Common myeloid progenitor, CD34-positive (primary cell): ENCODE measurements at regions of chr1 and their contacts with region 1.

Region 1: GRCh38 chr1:35488336-35488735 is 68.9 kb downstream of the KIAA0319L start:
- DNase-seq: peak in 2 of 3 donors; percentile 46 to 53
- H3K4me3 ChIP-seq: peak overlapping the region in 4 of 7 experiments; percentile 29 to 56 (median 48)
- H3K27ac ChIP-seq: peak overlapping the region in 1 of 2 experiments; percentile 18
- H3K4me1 ChIP-seq: peaks cover 0 to 12% (median 7%) of the 10 kb centered on the region in 4 experiments
- H3K27me3 ChIP-seq: no peaks in the 10 kb centered on the region

Region 2: DNA sequence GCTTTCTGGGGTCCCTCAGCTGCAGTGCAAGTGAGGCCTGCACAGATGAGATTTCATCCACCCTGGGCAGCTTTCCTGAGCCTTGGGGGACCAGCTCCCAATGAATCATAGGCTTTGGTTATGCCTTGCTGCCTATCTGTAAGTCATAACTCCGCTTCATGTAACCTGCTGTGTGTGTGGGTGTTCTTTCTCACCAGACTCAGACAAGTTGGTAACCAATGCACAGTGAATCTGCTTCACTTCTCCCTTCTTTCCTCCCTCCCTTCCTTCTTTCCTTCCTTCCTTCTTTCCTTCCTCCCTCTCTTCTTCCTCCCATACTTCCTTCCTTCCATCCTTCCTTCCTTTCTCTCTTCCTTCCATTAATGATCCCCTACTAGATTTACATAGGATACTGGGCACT is 187.4 kb after region 1 on chr1:
- CTCF ChIA-PET with region 1: no interaction called
- POLR2A ChIA-PET with region 1: interaction called, 10 read pairs
- DNase-seq: no peak
- H3K4me3 ChIP-seq: no peak overlapping the region
- H3K27ac ChIP-seq: no peak overlapping the region
- H3K4me1 ChIP-seq: no peaks in the 10 kb centered on the region
- H3K27me3 ChIP-seq: peaks cover 0 to 4% (median 0%) of the 10 kb centered on the region in 5 experiments